A549 (cell line): ENCODE measurements at regions of chr17 and their contacts with region 1.

Region 1: GRCh38 chr17:2054512-2055291 is at the start of gene HIC1:
- DNase-seq: peak; percentile 83 to 92
- ATAC-seq: peak; percentile 48 to 82
- H3K4me3 ChIP-seq: peak within 1 kb of the TSS; percentile 50
- H3K27ac ChIP-seq: peak within 1 kb of the TSS; percentile 39 to 82; a peak in 5 of 6 replicates
- H3K4me1 ChIP-seq: 0 out of 3 replicates have a peak, but pooled peaks cover 5% of the 10 kb centered on the region
- CTCF ChIP-seq: peak; percentile 98
- EP300 ChIP-seq: no peak
- POLR2A ChIP-seq: no peak
- RAD21 ChIP-seq: peak; percentile 71 to 94
- polyA plus RNA-seq, gene HIC1: 0.13 and 0.28 TPM in 2 replicates

Region 2: DNA sequence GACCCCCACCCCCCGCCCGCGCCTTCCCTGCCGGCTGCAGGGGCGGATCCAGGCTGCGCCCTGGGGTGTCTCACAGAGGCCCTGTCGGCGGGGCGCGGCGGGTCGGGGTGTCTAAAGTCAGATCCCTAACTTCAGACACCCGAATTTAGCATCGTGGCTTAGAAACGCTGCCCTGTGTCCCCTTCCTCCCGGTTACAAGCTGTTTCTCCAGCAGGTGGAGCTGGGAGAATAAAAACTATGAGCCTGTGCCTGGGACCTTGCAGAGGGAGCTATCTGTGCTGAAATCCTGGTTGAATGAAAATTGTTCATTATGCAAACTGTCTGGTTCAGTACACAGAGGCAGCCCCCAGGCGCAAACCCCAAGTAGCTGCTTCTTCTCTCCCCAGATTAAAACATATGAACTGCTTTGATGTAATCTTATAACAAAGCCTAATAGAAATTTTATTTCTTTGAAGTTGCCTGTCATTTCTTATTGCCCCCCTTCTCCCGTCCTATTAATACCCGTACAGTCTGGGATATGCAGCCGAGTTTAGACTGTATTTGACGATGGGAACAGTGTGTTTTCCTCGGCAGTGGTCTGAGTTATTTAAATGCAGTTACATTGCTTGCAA is 145.9 kb before region 1 on chr17:
- CTCF ChIA-PET with region 1: interaction called, 17 read pairs
- POLR2A ChIA-PET with region 1: no interaction called
- DNase-seq: peak; percentile 81 to 85
- ATAC-seq: peak; percentile 88 to 96
- H3K4me3 ChIP-seq: no peak overlapping the region
- H3K27ac ChIP-seq: peak overlapping the region in 1 of 2 experiments; percentile 33; a peak in 1 of 6 replicates
- H3K4me1 ChIP-seq: peaks cover 9% of the 10 kb centered on the region; the same call in 1 of the 3 replicates
- CTCF ChIP-seq: peak; percentile 95
- EP300 ChIP-seq: no peak
- POLR2A ChIP-seq: no peak
- RAD21 ChIP-seq: peak; percentile 97

Region 3: DNA sequence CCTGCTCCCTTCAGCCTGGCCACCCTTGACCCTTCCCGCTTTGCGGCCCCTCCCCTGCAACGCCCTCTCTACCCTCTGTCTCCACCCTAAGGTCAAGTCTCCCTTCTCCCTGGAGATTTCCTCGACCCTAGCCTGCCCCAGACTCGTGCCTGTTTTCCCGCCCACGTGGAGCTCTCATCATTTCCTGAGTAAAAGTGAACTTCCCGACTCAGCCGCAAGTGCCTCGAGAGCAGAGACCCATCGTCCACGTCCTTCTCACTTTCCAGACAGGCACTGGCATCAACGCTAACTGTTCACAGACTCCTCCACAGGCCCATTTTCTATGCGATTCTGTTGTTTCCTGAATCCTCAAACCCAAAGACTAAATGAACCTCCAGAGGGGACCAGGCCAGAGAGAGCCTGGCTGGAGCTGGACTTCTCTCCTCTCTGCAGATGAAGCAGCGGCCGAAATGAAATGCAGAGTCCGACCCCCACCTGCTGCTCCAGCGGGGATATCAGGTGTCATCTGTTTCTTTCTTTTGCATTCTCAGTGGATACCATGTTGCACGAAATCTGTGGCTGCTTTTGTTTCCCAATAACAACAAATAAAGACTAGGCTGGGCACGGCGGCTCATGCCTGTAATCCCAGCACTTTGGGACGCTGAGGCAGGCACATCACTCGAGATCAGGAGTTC is 82.1 kb before region 1 on chr17:
- CTCF ChIA-PET with region 1: no interaction called
- POLR2A ChIA-PET with region 1: no interaction called
- DNase-seq: no peak
- ATAC-seq: no peak
- H3K4me3 ChIP-seq: no peak overlapping the region
- H3K27ac ChIP-seq: no peak overlapping the region
- H3K4me1 ChIP-seq: no peaks in the 10 kb centered on the region
- CTCF ChIP-seq: no peak
- EP300 ChIP-seq: no peak
- POLR2A ChIP-seq: no peak
- RAD21 ChIP-seq: no peak

Region 4: DNA sequence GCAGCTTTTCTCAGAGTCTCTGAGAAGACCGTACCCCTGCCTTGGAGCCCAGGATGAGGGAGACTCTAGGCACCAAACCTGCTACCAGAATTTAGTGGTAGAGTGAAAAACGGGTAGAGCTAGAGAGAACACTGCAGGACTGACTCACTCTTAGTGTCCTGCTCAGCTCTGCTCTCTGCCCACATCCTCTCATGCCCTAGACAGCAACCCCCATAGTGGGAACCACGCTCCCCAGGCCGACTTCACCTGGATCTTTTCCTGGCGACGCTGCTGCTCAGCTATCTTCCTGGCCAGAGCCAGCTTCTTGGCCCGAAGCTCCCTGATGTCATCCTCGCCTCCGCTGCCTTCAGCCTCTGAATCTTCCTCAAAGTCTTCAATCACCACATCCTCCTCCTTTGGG is 26.9 kb after region 1 on chr17:
- CTCF ChIA-PET with region 1: interaction called, 217 read pairs
- POLR2A ChIA-PET with region 1: no interaction called
- DNase-seq: no peak
- ATAC-seq: no peak
- H3K4me3 ChIP-seq: no peak overlapping the region
- H3K27ac ChIP-seq: no peak overlapping the region
- H3K4me1 ChIP-seq: peaks cover 27% of the 10 kb centered on the region
- CTCF ChIP-seq: no peak
- EP300 ChIP-seq: no peak
- POLR2A ChIP-seq: no peak
- RAD21 ChIP-seq: no peak

Region 5: DNA sequence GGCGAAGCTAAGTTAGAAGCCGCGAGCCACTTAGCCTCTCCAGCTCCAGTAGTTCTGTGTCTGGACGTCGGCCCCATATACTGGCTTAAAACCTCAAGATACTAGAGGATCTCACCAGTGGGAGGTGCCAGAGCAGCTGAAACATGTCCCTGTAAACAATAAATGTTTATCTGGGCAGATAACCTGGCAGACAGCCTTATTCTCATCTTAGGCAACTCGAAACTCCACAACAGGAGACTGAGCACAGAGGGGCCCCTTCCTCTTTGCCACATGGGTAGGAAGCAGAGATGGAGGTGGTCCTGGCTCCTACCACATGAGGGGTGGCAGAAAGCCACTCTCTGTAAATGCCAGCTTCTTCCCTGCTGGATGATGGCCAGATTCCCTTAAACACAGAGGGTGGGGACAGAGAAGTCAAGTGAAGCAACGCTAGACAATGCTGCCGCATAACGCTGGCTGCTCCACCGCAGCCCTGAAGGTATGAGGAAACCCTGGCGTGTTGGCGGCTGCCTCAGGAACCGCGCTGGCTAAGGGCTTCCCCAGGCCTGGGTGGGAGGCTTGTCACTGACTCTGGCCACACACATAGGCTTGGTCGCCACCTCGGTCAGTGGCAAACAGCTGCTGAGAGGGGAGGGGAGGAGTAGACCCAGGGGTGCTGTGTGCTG is 68.1 kb after region 1 on chr17:
- CTCF ChIA-PET with region 1: interaction called, 18 read pairs
- POLR2A ChIA-PET with region 1: no interaction called
- DNase-seq: no peak
- ATAC-seq: peak; percentile 32 to 58; a peak in 4 of 6 replicates
- H3K4me3 ChIP-seq: no peak overlapping the region
- H3K27ac ChIP-seq: no peak overlapping the region
- H3K4me1 ChIP-seq: peaks cover 4% of the 10 kb centered on the region; the same call in 2 of the 3 replicates
- CTCF ChIP-seq: no peak
- EP300 ChIP-seq: no peak
- POLR2A ChIP-seq: no peak
- RAD21 ChIP-seq: no peak

Region 6: GRCh38 chr17:2215616-2216364 is 161.1 kb after region 1 on chr17:
- CTCF ChIA-PET with region 1: interaction called, 17 read pairs
- POLR2A ChIA-PET with region 1: no interaction called
- DNase-seq: no peak
- ATAC-seq: peak; percentile 20 to 48; a peak in 2 of 6 replicates
- H3K4me3 ChIP-seq: no peak overlapping the region
- H3K27ac ChIP-seq: no peak overlapping the region
- H3K4me1 ChIP-seq: no peaks in the 10 kb centered on the region
- CTCF ChIP-seq: no peak
- EP300 ChIP-seq: no peak
- POLR2A ChIP-seq: no peak
- RAD21 ChIP-seq: no peak

Region 7: DNA sequence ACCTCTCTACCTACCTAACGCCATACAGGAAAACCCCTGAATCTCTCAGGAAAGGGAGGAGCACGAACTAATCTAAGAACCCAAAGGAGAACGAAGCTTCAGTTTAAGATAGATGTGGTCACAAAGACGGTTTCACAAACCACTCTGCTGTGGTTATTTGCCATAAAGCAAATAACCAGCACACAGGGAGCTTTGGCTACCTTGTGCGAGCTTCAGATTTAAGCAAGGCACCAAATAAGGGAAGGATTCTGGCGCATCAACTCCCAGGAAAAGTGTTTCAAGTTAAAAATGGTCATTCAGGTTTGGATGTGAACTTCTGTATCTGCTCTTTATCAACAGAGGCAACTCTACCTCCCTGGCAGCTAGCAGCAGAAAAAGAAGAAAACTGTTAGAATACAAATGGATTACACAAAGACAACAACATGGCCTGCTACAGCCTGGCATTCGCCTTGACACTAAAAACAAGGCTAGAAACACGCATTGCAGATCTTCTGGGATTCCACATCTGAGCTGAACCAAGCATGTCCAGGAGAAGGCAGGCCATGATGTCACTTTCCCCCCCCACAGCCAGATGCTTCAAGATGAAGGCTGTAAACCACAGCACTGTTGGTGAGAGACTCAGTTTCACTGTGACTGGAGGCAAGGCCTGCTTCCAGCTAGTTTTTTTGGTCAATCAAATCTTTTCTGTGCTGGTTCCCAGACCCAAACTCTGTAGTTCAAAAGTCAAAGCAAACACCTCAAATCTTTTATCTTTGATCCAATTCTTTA is 205.3 kb after region 1 on chr17:
- CTCF ChIA-PET with region 1: interaction called, 22 read pairs
- POLR2A ChIA-PET with region 1: no interaction called
- DNase-seq: no peak
- ATAC-seq: no peak
- H3K4me3 ChIP-seq: no peak overlapping the region
- H3K27ac ChIP-seq: no peak overlapping the region
- H3K4me1 ChIP-seq: peaks cover 22% of the 10 kb centered on the region
- CTCF ChIP-seq: no peak
- EP300 ChIP-seq: no peak
- POLR2A ChIP-seq: no peak
- RAD21 ChIP-seq: no peak

Region 8: DNA sequence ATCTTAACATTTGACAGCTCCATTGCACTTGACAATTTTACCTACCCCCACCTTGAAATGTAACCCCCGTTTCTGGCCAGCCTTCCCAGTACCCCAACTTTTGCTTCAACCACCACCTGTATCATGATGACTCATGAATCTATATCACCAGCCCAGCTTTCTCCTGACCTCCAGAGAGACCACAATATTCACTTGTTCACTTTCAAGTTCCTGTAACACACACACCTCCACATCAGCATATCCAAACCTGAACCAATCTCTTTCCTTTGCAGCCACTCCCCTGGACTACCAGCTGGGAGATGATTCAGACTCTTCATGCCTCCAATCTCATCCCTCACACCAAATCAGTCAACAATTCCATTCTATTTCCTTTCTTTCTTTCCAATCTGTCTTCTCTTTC is 240.9 kb after region 1 on chr17:
- CTCF ChIA-PET with region 1: interaction called, 201 read pairs
- POLR2A ChIA-PET with region 1: no interaction called
- DNase-seq: no peak
- ATAC-seq: no peak
- H3K4me3 ChIP-seq: no peak overlapping the region
- H3K27ac ChIP-seq: no peak overlapping the region
- H3K4me1 ChIP-seq: peaks cover 7% of the 10 kb centered on the region; the same call in 1 of the 3 replicates
- CTCF ChIP-seq: no peak
- EP300 ChIP-seq: no peak
- POLR2A ChIP-seq: no peak
- RAD21 ChIP-seq: no peak